HepG2 (cell line): ENCODE measurements at regions of chr18 and their contacts with region 1.

Region 1: GRCh38 chr18:62522504-62523254 is at the start of gene ZCCHC2:
- DNase-seq: peak; percentile 92
- ATAC-seq: peak; percentile 89
- H3K4me3 ChIP-seq: peak within 1 kb of the TSS; percentile 92 to 98 (median 96)
- H3K27ac ChIP-seq: peak within 1 kb of the TSS; percentile 96
- H3K4me1 ChIP-seq: peaks cover 39% of the 10 kb centered on the region
- H3K27me3 ChIP-seq: no peaks in the 10 kb centered on the region; a peak in 1 of 5 replicates
- CTCF ChIP-seq: peak; percentile 24; the same call in 1 of the 2 replicates
- EP300 ChIP-seq: peak in 1 of 2 experiments; percentile 38; a peak in 1 of 4 replicates
- POLR2A ChIP-seq: peak in 1 of 2 experiments; percentile 75; a peak in 2 of 4 replicates
- RAD21 ChIP-seq: no peak; the same call in none of the 2 replicates
- total RNA-seq, gene ZCCHC2: 76.1 and 76.5 TPM in 2 replicates

Region 2: DNA sequence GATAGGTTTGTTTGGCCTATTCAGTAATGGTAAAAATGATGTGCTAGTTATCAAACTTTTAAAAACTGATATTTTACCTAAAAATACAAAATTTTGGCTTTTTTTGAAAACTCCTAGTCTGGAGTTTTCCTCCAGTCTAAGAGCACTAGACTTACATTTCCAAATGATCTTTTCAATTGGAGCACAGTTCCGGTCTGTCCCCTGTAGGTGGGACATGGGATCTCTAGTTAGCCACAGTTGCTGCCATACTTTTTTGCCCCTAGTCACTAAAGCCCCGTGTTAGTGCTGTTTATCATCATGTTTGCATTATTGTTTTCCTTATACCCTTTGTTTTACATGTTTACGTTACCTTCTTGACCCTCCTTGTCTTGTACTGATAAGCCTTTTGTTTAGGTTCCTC is 283.2 kb before region 1 on chr18:
- CTCF ChIA-PET with region 1: no interaction called
- POLR2A ChIA-PET with region 1: no interaction called
- in situ Hi-C with region 1: no loop called
- intact Hi-C with region 1: no loop called
- DNase-seq: peak; percentile 1
- ATAC-seq: no peak
- H3K4me3 ChIP-seq: no peak overlapping the region
- H3K27ac ChIP-seq: no peak overlapping the region
- H3K4me1 ChIP-seq: no peaks in the 10 kb centered on the region
- H3K27me3 ChIP-seq: no peaks in the 10 kb centered on the region
- CTCF ChIP-seq: no peak
- EP300 ChIP-seq: no peak
- POLR2A ChIP-seq: no peak
- RAD21 ChIP-seq: no peak

Region 3: GRCh38 chr18:62425465-62426195 is 97.0 kb before region 1 on chr18:
- CTCF ChIA-PET with region 1: interaction called, 4 read pairs
- POLR2A ChIA-PET with region 1: interaction called, 31 read pairs
- in situ Hi-C with region 1: loop called (anchors 5 kb)
- intact Hi-C with region 1: loop called (anchors 1 kb)
- DNase-seq: peak; percentile 88
- ATAC-seq: peak; percentile 81
- H3K4me3 ChIP-seq: peak overlapping the region; percentile 42 to 68 (median 62)
- H3K27ac ChIP-seq: peak overlapping the region; percentile 61
- H3K4me1 ChIP-seq: peaks cover 67% of the 10 kb centered on the region
- H3K27me3 ChIP-seq: no peaks in the 10 kb centered on the region
- CTCF ChIP-seq: peak; percentile 91
- EP300 ChIP-seq: no peak
- POLR2A ChIP-seq: no peak
- RAD21 ChIP-seq: peak; percentile 88

Region 4: DNA sequence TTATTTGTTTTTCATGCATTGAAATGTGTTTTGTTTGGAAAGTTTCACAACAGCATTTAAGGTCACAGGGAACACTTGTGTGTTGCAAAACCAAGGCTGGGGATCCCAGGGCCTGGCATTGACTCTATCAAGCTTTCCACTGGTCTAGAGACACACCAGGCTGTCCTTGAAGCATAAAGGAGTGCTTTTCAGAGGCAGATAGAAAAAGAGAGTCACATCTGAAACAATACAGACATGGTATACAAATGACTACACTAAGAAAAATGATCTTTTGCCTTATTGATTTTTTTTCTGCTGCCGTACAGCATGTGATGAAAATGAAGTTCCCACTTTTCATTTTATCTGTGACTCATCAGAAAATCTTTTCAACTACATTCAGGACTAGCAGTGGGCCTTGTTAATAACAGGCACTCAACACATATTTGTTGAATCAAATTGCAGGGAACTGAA is 61.8 kb before region 1 on chr18:
- CTCF ChIA-PET with region 1: no interaction called
- POLR2A ChIA-PET with region 1: interaction called, 41 read pairs
- in situ Hi-C with region 1: loop called (anchors 10 kb)
- intact Hi-C with region 1: loop called (anchors 2 kb)
- DNase-seq: peak; percentile 99
- ATAC-seq: peak; percentile 96
- H3K4me3 ChIP-seq: peak overlapping the region in 2 of 3 experiments; percentile 44 to 45; a peak in 4 of 6 replicates
- H3K27ac ChIP-seq: peak overlapping the region; percentile 95
- H3K4me1 ChIP-seq: peaks cover 69% of the 10 kb centered on the region
- H3K27me3 ChIP-seq: no peaks in the 10 kb centered on the region
- CTCF ChIP-seq: no peak
- EP300 ChIP-seq: peak; percentile 93 to 96
- POLR2A ChIP-seq: peak in 1 of 2 experiments; percentile 42; a peak in 1 of 4 replicates
- RAD21 ChIP-seq: peak; percentile 56; the same call in 1 of the 2 replicates

Region 5: GRCh38 chr18:62500174-62500573 is 22.5 kb before region 1 on chr18:
- CTCF ChIA-PET with region 1: no interaction called
- POLR2A ChIA-PET with region 1: interaction called, 13 read pairs
- in situ Hi-C with region 1: no loop called
- intact Hi-C with region 1: no loop called
- DNase-seq: no peak
- ATAC-seq: peak; percentile 17; the same call in 1 of the 3 replicates
- H3K4me3 ChIP-seq: no peak overlapping the region
- H3K27ac ChIP-seq: peak overlapping the region; percentile 47
- H3K4me1 ChIP-seq: peaks cover 48% of the 10 kb centered on the region
- H3K27me3 ChIP-seq: no peaks in the 10 kb centered on the region
- CTCF ChIP-seq: no peak
- EP300 ChIP-seq: no peak
- POLR2A ChIP-seq: no peak
- RAD21 ChIP-seq: no peak

Region 6: GRCh38 chr18:62537946-62538345 is 15.3 kb after region 1 on chr18:
- CTCF ChIA-PET with region 1: no interaction called
- POLR2A ChIA-PET with region 1: interaction called, 13 read pairs
- in situ Hi-C with region 1: no loop called
- intact Hi-C with region 1: no loop called
- DNase-seq: no peak
- ATAC-seq: no peak
- H3K4me3 ChIP-seq: no peak overlapping the region
- H3K27ac ChIP-seq: no peak overlapping the region
- H3K4me1 ChIP-seq: peaks cover 72% of the 10 kb centered on the region
- H3K27me3 ChIP-seq: no peaks in the 10 kb centered on the region
- CTCF ChIP-seq: no peak
- EP300 ChIP-seq: no peak
- POLR2A ChIP-seq: no peak
- RAD21 ChIP-seq: no peak